ENCODE measurements at regions of chr19 and their contacts with region 1.

Region 1: DNA sequence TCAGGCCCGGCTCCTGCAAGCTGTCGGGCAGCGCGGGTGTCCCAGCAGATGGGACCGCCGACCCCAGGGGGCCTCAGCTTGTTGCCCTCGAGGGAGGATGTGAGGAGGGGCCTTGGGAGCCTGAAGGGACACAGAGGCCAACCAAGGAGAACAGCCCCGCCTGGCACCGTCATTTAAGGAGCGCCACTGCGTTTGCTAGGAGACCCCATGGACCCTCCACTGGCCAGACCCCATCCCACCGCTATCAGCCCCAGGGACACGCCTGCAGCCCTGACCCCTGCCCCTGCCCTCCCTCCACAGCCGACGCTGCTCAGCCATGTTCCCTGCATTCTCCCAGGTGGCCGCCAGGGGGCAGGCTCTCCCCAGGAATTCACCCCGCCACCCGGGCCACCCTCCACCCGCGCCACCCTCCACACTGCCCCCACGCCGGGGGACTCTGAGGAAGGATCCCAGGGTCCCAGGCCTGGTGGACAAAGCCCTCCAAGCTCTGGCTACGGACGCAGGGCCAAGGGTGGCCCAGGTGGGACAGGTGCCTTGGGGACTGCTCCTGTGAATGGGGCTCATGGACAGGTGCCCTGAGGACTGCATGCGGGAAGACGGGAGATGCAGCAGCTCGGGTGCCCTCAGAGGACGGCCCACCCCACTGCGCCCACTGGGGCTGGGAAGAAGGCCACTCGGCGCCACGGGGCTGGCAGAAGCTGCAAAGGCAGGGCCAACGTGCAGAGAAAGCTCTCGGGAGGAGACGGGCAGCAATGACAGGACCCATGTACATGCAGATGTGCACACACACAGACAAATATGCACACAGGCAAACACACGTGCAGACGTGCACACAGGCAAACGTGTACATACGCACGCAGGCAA is 34.4 kb downstream of the PIP5K1C start:
- DNase-seq: peak; percentile 67 to 82 (median 70)
- H3K4me3 ChIP-seq: no peak overlapping the region
- H3K4me3 Mint-ChIP-seq: no peak overlapping the region
- H3K27ac ChIP-seq: no peak overlapping the region
- H3K27ac Mint-ChIP-seq: no peak overlapping the region
- H3K4me1 ChIP-seq: peaks cover 7% of the 10 kb centered on the region
- H3K4me1 Mint-ChIP-seq: peaks cover 0 to 30% (median 4%) of the 10 kb centered on the region in 3 donors
- H3K27me3 ChIP-seq: no peaks in the 10 kb centered on the region
- H3K27me3 Mint-ChIP-seq: no peaks in the 10 kb centered on the region

Region 2: GRCh38 chr19:3608750-3609322 is 57.1 kb before region 1 on chr19:
- CTCF ChIA-PET with region 1: no interaction called
- POLR2A ChIA-PET with region 1: no interaction called
- DNase-seq: peak in 1 of 5 donors; percentile 39
- H3K4me3 ChIP-seq: no peak overlapping the region
- H3K4me3 Mint-ChIP-seq: no peak overlapping the region
- H3K27ac ChIP-seq: peak overlapping the region; percentile 59
- H3K27ac Mint-ChIP-seq: peak overlapping the region in 2 of 8 donors; percentile 33 to 94
- H3K4me1 ChIP-seq: peaks cover 29% of the 10 kb centered on the region
- H3K4me1 Mint-ChIP-seq: peaks cover 8 to 18% (median 13%) of the 10 kb centered on the region in 3 donors
- H3K27me3 ChIP-seq: no peaks in the 10 kb centered on the region
- H3K27me3 Mint-ChIP-seq: no peaks in the 10 kb centered on the region

Region 3: GRCh38 chr19:3625996-3626472 is 39.9 kb before region 1 on chr19:
- CTCF ChIA-PET with region 1: no interaction called
- POLR2A ChIA-PET with region 1: no interaction called
- DNase-seq: no peak
- H3K4me3 ChIP-seq: peak overlapping the region; percentile 87
- H3K4me3 Mint-ChIP-seq: peak overlapping the region; percentile 78 to 99 (median 96)
- H3K27ac ChIP-seq: peak overlapping the region; percentile 77
- H3K27ac Mint-ChIP-seq: peak overlapping the region; percentile 49 to 99 (median 89)
- H3K4me1 ChIP-seq: peaks cover 20% of the 10 kb centered on the region
- H3K4me1 Mint-ChIP-seq: peaks cover 26 to 36% (median 36%) of the 10 kb centered on the region in 3 donors
- H3K27me3 ChIP-seq: no peaks in the 10 kb centered on the region
- H3K27me3 Mint-ChIP-seq: no peaks in the 10 kb centered on the region

Region 4: DNA sequence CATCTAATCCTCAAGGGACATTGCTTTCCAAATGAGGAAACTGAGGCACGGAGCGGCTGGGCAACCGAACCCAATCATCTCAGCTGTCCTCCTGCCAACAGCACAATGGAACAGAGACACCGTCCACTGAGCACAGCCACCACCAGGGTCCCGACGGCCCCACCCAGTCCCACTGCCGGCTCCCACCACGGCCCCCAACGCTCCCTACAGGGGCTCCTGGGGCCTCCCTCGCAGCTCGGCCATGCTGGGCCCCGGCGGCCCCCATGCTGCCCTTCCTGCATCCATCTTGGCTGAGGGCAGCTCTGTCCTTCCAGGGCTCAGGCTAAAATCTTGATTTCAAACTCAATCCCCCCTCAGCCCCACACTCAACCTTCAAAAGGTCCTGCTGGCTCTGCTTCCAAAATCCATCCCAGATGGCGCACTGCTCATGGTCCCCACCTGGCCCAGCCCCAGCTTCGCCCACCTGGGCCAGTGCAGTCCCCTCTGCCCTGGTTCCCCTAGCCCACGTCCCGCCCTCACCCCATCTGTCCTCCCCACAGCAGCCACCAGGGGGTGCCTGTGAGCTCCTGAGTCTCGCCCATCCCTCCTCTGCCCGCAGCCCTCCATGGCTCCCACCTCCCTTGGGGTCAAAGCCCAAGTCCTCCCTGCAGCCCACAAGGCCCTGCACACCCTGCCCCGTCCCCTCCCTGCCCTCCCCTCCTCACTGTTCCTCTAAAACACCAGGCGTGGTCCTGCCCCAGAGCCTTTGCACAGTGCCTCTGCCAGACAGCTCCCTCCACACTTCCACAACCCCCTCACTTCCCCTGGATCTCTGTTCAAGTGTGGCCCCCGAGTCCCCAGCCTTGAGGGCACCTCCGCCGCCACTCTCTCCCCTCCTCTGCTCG is 26.5 kb after region 1 on chr19:
- CTCF ChIA-PET with region 1: interaction called, 15 read pairs
- POLR2A ChIA-PET with region 1: interaction called, 3 read pairs
- DNase-seq: peak; percentile 29 to 73 (median 42)
- H3K4me3 ChIP-seq: no peak overlapping the region
- H3K4me3 Mint-ChIP-seq: peak overlapping the region in 2 of 7 donors; percentile 54 to 71
- H3K27ac ChIP-seq: no peak overlapping the region
- H3K27ac Mint-ChIP-seq: peak overlapping the region in 2 of 8 donors; percentile 84 to 89
- H3K4me1 ChIP-seq: peaks cover 16% of the 10 kb centered on the region
- H3K4me1 Mint-ChIP-seq: peaks cover 23 to 50% (median 27%) of the 10 kb centered on the region in 3 donors
- H3K27me3 ChIP-seq: no peaks in the 10 kb centered on the region
- H3K27me3 Mint-ChIP-seq: no peaks in the 10 kb centered on the region

Region 5: DNA sequence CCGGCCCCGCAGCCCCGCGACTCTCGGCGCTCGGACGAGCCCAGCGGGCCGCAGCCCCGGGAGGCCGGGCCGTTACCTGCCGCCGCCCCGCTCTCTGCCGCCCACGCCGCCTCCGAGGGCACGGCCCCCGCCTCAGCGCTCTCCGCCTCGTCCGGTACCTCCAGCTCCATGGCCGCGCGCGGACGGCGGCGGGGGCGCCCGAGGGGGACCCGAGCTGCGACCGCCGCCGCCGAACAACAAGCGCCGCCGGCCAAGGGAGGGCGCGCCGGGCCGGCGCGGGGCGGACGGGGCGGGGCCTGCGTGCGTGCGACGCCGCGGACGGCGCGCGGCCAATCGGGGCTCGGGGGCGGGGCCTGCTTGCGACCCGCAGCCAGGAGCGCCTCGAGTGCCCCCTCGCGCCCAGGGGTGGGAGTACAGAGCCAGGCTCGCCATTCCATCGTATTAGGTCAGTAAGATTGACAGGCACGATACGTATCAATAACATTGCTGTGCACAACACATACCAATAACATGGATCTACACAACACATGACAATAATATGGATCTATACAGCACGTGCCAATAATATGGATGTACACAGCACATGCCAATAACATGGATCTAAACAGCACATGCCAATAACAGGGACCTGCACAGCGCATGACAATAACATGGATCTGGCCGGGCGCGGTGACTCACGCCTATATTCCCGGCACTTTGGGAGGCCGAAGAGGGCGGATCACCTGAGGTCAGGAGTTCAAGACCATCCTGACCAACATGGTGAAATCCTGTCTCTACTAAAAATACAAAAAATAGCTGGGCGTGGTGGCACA is 34.5 kb after region 1 on chr19 and contains the start of gene PIP5K1C:
- CTCF ChIA-PET with region 1: interaction called, 22 read pairs
- POLR2A ChIA-PET with region 1: interaction called, 3 read pairs
- DNase-seq: peak; percentile 88 to 93 (median 90)
- H3K4me3 ChIP-seq: peak within 1 kb of the TSS; percentile 60
- H3K4me3 Mint-ChIP-seq: peak within 1 kb of the TSS; percentile 86 to 97 (median 89)
- H3K27ac ChIP-seq: peak within 1 kb of the TSS; percentile 48
- H3K27ac Mint-ChIP-seq: peak within 1 kb of the TSS; percentile 50 to 91 (median 76)
- H3K4me1 ChIP-seq: peaks cover 9% of the 10 kb centered on the region
- H3K4me1 Mint-ChIP-seq: peaks cover 12 to 44% (median 20%) of the 10 kb centered on the region in 3 donors
- H3K27me3 ChIP-seq: no peaks in the 10 kb centered on the region
- H3K27me3 Mint-ChIP-seq: peaks cover 0 to 2% of the 10 kb centered on the region in 2 donors
- total RNA-seq, gene PIP5K1C: 26.9 to 27.6 TPM

Region 6: DNA sequence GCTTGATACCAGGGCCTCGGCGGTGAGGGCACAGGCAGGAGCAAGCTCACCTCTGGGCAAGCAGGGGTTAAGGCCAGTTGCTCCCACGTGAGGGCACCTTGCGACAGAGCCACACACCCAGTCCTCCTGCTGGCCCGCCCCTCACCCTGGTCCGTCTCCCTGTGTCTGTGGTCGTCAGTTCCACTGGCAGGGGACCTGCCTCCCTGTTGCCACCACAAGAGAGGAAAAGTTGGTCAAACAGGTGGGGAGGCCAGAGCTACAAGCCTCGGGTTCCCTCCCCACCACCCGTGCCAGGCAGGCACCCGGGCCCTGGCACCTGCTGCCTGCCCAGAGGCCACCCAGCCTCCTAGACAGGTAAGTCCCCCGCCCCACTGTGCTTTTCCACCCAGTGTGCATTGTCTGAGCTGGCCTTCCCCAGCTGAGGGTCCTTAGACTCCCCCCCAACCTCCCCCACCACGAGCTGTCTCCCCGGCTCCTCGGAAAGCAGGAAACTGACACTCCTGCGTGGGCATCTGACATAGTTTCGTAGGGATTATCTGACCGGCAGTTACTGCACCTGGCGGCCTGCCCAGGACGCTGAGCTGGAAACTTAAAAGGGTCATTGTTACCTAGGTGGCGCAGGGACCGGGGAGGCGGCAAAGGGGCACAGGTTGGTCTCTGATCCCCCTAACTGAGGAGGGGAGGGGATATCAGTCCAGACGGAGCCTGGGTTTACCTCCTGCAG is 42.5 kb after region 1 on chr19 and contains the start of gene TJP3:
- CTCF ChIA-PET with region 1: interaction called, 22 read pairs
- POLR2A ChIA-PET with region 1: interaction called, 3 read pairs
- DNase-seq: no peak
- H3K4me3 ChIP-seq: no peak within 1 kb of the TSS
- H3K4me3 Mint-ChIP-seq: no peak within 1 kb of the TSS
- H3K27ac ChIP-seq: no peak within 1 kb of the TSS
- H3K27ac Mint-ChIP-seq: peak within 1 kb of the TSS in 1 of 8 donors; percentile 17
- H3K4me1 ChIP-seq: no peaks in the 10 kb centered on the region
- H3K4me1 Mint-ChIP-seq: peaks cover 1 to 7% (median 6%) of the 10 kb centered on the region in 3 donors
- H3K27me3 ChIP-seq: no peaks in the 10 kb centered on the region
- H3K27me3 Mint-ChIP-seq: peaks cover 10 to 13% of the 10 kb centered on the region in 2 donors
- total RNA-seq, gene TJP3: 1.5 to 1.7 TPM